Panc1 (cell line): ENCODE measurements at regions of chr19 and their contacts with region 1.

Region 1: GRCh38 chr19:46076951-46077816 is 36.4 kb upstream of the IGFL4 start:
- DNase-seq: no peak
- ATAC-seq: peak; percentile 95
- H3K4me3 ChIP-seq: peak overlapping the region; percentile 37 to 67
- H3K27ac ChIP-seq: no peak overlapping the region
- H3K4me1 ChIP-seq: no peaks in the 10 kb centered on the region; the same call in 1 of the 2 replicates
- H3K27me3 ChIP-seq: peaks cover 13% of the 10 kb centered on the region
- CTCF ChIP-seq: peak; percentile 93

Region 2: DNA sequence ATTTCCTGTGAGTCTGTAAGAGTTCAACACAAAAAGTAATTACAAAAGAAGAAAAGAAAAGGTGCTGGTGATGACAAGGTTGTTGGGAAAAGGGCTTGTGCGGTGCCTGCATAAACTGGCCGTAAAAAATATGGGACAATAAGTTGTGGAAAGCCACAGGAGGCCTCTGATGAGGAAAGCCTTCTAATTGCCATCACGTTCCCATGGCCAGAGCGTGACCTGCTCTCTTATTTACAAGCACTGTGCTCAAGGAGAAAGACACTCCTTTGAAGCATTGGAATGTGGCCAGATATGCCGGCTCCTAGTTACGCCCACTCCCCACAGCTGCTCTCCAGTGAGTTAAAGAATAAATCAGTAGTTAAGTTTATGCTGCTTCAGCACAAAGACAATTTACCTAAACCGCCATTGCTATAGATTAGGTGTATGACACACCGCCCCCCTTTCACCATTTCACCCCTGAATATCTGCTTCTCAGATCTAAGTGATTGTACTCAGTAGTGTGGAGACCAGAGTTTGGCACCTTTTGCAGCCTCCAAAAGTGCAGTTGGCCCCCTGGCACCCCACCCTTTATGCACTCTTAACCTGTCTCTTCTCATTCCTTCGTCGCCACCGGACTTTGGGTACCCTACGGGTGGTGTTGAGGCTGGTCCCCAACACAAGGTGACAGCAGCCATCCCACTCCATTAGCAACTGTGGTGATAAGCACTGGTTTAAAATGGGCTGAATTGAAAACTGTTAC is 46.2 kb before region 1 on chr19:
- CTCF ChIA-PET with region 1: interaction called, 6 read pairs
- POLR2A ChIA-PET with region 1: no interaction called
- in situ Hi-C with region 1: no loop called
- intact Hi-C with region 1: loop called (anchors 1 kb)
- DNase-seq: no peak
- ATAC-seq: no peak
- H3K4me3 ChIP-seq: no peak overlapping the region
- H3K27ac ChIP-seq: no peak overlapping the region
- H3K4me1 ChIP-seq: no peaks in the 10 kb centered on the region
- H3K27me3 ChIP-seq: no peaks in the 10 kb centered on the region
- CTCF ChIP-seq: no peak

Region 3: GRCh38 chr19:46049597-46049996 is 27.6 kb before region 1 on chr19:
- CTCF ChIA-PET with region 1: no interaction called
- POLR2A ChIA-PET with region 1: no interaction called
- in situ Hi-C with region 1: no loop called
- intact Hi-C with region 1: no loop called
- DNase-seq: no peak
- ATAC-seq: no peak
- H3K4me3 ChIP-seq: no peak overlapping the region
- H3K27ac ChIP-seq: no peak overlapping the region
- H3K4me1 ChIP-seq: no peaks in the 10 kb centered on the region
- H3K27me3 ChIP-seq: no peaks in the 10 kb centered on the region
- CTCF ChIP-seq: peak; percentile 27; the same call in 1 of the 2 replicates

Region 4: GRCh38 chr19:46191972-46192371 is 114.8 kb after region 1 on chr19:
- CTCF ChIA-PET with region 1: interaction called, 4 read pairs
- POLR2A ChIA-PET with region 1: no interaction called
- in situ Hi-C with region 1: no loop called
- intact Hi-C with region 1: loop called (anchors 2 kb)
- DNase-seq: no peak
- ATAC-seq: no peak
- H3K4me3 ChIP-seq: no peak overlapping the region
- H3K27ac ChIP-seq: no peak overlapping the region
- H3K4me1 ChIP-seq: no peaks in the 10 kb centered on the region; the same call in 1 of the 2 replicates
- H3K27me3 ChIP-seq: no peaks in the 10 kb centered on the region; the same call in 1 of the 2 replicates
- CTCF ChIP-seq: no peak

Region 5: GRCh38 chr19:46265217-46265828 is 188.1 kb after region 1 on chr19:
- CTCF ChIA-PET with region 1: interaction called, 13 read pairs
- POLR2A ChIA-PET with region 1: no interaction called
- in situ Hi-C with region 1: no loop called
- intact Hi-C with region 1: loop called (anchors 5 kb)
- DNase-seq: no peak
- ATAC-seq: peak; percentile 91
- H3K4me3 ChIP-seq: no peak overlapping the region
- H3K27ac ChIP-seq: no peak overlapping the region
- H3K4me1 ChIP-seq: no peaks in the 10 kb centered on the region
- H3K27me3 ChIP-seq: no peaks in the 10 kb centered on the region
- CTCF ChIP-seq: peak; percentile 82